GM13976 (cell line): ENCODE measurements at regions of chr11 and their contacts with region 1.

Region 1: GRCh38 chr11:95764267-95764898 is 25.2 kb downstream of the FAM76B start:
- DNase-seq: peak; percentile 50
- CTCF ChIP-seq: peak; percentile 20

Region 2: GRCh38 chr11:95150946-95151684 is 613.3 kb before region 1 on chr11:
- in situ Hi-C with region 1: loop called (anchors 5 kb)
- DNase-seq: peak; percentile 93
- CTCF ChIP-seq: peak; percentile 61